GM12878 (cell line): ENCODE measurements at regions of chr17 and their contacts with region 1.

Region 1: DNA sequence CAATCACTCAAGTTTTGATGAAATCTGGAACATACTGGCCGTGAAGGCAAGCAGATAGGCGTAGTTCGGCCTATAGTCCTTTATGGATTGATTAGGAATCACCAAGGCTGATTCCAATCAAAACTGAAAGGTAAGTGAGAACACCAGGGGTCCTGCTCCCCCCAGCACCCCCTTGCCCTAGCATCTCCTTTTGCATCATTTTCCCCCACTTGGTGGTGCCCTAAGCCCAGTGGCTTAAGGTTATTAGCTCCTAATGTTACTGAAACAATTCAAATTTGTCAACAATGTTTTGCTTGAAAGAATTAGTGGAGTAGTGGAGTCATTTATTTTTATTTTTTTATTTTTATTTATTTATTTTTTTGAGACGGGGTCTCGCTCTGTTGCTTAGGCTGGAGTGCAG is 4.9 kb downstream of the SLFN14 start:
- DNase-seq: no peak
- ATAC-seq: peak; percentile 49; the same call in 2 of the 3 replicates
- H3K4me3 ChIP-seq: no peak overlapping the region
- H3K27ac ChIP-seq: no peak overlapping the region
- H3K4me1 ChIP-seq: no peaks in the 10 kb centered on the region
- H3K27me3 ChIP-seq: no peaks in the 10 kb centered on the region
- CTCF ChIP-seq: peak; percentile 22 to 36 (median 25); a peak in 4 of 6 replicates
- EP300 ChIP-seq: no peak
- POLR2A ChIP-seq: no peak
- RAD21 ChIP-seq: peak; percentile 44; the same call in 1 of the 2 replicates

Region 2: DNA sequence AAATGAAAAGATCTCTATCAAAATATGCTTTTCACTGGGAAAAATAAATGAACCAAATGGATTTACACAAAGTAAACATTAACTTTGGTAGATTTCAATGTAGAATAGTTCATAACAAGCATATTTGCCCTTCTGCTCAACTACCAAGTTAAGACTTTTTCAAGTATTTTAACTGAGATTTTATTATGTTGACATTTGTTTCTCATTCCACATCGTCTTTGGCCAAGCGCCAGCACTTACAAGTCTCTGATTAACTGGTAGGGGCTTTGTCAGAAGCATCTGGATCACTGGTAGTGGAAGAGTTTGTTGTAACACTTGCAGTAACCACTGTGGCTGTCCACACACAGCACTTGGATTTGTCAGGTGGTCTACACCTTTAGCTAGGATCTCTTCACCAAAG is 41.1 kb before region 1 on chr17:
- CTCF ChIA-PET with region 1: no interaction called
- POLR2A ChIA-PET with region 1: no interaction called
- RAD21 ChIA-PET with region 1: no interaction called
- SMC1A ChIA-PET with region 1: no interaction called
- in situ Hi-C with region 1: loop called (anchors 5 kb)
- intact Hi-C with region 1: no loop called
- DNase-seq: no peak
- ATAC-seq: no peak
- H3K4me3 ChIP-seq: no peak overlapping the region
- H3K27ac ChIP-seq: no peak overlapping the region
- H3K4me1 ChIP-seq: no peaks in the 10 kb centered on the region
- H3K27me3 ChIP-seq: no peaks in the 10 kb centered on the region
- CTCF ChIP-seq: no peak
- EP300 ChIP-seq: no peak
- POLR2A ChIP-seq: no peak
- RAD21 ChIP-seq: no peak